Transverse colon (tissue), 4 donors: ENCODE measurements at regions of chr6 and their contacts with region 1.

Region 1: DNA sequence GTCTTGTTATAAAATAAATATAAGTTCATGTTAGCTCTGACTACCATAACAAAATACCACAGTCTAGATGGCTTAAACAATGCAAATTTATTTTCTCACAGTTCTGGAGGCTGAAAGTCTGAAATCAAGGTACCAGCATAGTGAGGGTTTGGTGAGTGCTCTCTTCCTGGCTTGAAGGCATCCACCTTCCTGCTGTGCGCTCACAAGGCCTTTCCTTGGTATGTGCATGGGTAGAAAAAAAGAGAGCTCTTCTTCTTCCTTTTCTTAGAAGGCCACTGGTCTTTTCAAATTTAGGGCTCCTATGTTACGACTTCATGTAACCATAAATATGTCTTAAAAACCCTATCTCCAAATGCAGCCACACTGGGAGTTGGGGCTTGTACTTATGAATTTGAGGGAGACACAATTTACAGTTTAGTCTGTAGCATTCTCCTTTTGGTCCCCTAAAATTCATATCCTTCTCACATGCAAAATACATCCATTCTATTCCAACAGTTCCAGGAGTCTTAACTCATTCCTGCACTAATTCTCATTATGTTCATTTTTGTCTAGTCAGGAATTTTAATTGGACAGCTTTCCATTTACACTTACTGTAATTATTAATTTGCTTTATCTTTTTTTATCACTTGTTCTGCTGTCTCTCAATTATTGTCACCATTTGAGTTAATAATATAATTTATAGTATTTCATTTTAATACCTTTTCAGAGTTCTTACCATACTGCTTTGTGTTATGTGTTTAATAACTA is 381.9 kb upstream of the EPHA7 start:
- DNase-seq: no peak
- H3K4me3 ChIP-seq: no peak overlapping the region
- H3K27ac ChIP-seq: no peak overlapping the region
- H3K4me1 ChIP-seq: no peaks in the 10 kb centered on the region
- H3K27me3 ChIP-seq: no peaks in the 10 kb centered on the region
- CTCF ChIP-seq: no peak
- EP300 ChIP-seq: no peak
- POLR2A ChIP-seq: no peak

Region 2: GRCh38 chr6:92756912-92757311 is 1044.4 kb before region 1 on chr6:
- in situ Hi-C with region 1: no loop called
- intact Hi-C with region 1: loop called (anchors 5 kb)
- DNase-seq: no peak
- H3K4me3 ChIP-seq: no peak overlapping the region
- H3K27ac ChIP-seq: no peak overlapping the region
- H3K4me1 ChIP-seq: no peaks in the 10 kb centered on the region
- H3K27me3 ChIP-seq: no peaks in the 10 kb centered on the region
- CTCF ChIP-seq: no peak
- EP300 ChIP-seq: no peak
- POLR2A ChIP-seq: no peak

Region 3: GRCh38 chr6:93848031-93848742 is 46.9 kb after region 1 on chr6:
- in situ Hi-C with region 1: no loop called
- intact Hi-C with region 1: no loop called
- DNase-seq: no peak
- H3K4me3 ChIP-seq: no peak overlapping the region
- H3K27ac ChIP-seq: no peak overlapping the region
- H3K4me1 ChIP-seq: no peaks in the 10 kb centered on the region
- H3K27me3 ChIP-seq: no peaks in the 10 kb centered on the region
- CTCF ChIP-seq: no peak
- EP300 ChIP-seq: no peak
- POLR2A ChIP-seq: no peak